Caki2 (cell line): ENCODE measurements at regions of chr1 and their contacts with region 1.

Region 1: DNA sequence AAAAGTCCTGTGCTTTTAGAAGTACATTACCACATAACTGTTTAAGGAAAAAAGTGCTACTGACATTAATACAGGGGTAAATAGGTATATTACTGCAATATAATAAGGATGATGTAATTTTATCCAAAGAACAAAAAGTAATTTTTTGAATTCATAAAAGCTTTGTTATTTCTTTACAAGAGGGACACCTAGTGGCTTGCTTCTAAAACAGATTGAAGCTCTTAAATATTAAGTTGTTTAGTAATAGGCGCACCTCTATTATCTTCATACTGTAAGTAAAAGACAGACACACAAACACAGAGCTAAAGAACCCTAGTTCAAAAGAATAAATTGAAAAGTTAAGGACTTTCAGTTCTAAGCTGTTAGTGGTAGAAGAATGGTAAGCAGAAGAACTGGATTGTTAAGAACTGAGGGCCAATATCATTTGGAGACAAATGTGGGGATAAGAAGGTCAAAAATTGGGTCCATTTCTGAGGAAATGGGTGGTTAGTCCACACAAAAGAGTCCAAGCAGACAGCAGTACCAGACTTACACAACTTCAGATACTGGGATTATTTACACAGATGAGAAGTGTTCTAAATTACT is 15.4 kb downstream of the ZNHIT6 start:
- DNase-seq: peak; percentile 18

Region 2: DNA sequence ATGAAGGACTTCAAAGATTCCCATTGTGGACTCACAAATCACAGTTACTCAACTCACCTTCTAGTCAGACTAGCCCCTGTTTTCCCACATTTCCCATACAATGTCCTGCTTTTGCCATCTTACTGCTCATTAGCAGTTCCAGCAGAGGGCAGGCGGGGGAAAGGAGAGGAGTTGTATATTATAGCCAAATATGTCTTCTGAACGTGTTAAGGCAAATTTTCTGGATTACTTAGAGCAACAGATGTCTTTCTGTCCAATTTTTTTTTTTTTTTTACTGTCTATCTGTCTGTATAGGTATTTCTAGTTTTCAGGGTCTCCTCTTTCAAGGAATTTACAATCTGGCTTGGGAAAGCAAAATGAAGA is 197.9 kb before region 1 on chr1:
- in situ Hi-C with region 1: loop called (anchors 25 kb)
- DNase-seq: peak; percentile 11

Region 3: DNA sequence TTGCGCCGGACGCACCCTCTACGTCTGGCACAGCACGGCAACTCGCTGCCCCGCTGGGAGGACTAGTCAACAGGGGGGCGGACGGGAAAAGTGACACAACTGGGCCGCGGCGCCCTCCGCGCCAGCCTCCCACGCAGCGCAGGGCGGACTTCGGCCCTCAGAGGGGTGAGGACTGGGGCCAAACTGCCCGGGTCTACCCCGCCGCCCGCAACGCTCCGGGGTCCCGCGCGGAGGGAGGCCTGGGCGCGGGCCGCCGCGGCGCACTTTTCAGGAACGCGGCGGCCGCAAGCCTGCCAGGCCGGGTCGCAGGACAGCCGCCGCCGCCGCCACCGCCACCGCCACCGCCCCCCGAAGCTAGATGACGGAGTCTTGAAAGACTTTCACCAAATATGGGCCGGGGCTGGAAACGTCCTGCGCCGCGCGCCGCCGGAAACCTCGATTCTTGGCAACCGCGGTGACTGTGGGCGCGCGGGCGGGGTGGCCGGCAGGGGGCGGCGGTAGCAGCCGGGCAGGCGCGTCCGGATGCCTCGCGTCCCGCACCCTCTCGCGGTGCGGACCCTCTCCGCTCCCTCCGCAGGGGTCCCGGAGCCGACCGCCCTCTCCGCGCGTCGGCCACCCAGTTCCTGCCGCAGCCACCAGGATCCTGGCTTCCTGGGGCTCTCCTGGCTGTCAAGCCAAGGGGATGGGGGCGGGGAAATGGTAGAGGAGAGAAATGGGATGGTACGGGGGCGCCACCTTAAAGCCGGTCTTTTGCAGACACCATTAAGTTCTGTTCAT is 116.0 kb before region 1 on chr1:
- in situ Hi-C with region 1: loop called (anchors 25 kb)
- DNase-seq: peak; percentile 71

Region 4: DNA sequence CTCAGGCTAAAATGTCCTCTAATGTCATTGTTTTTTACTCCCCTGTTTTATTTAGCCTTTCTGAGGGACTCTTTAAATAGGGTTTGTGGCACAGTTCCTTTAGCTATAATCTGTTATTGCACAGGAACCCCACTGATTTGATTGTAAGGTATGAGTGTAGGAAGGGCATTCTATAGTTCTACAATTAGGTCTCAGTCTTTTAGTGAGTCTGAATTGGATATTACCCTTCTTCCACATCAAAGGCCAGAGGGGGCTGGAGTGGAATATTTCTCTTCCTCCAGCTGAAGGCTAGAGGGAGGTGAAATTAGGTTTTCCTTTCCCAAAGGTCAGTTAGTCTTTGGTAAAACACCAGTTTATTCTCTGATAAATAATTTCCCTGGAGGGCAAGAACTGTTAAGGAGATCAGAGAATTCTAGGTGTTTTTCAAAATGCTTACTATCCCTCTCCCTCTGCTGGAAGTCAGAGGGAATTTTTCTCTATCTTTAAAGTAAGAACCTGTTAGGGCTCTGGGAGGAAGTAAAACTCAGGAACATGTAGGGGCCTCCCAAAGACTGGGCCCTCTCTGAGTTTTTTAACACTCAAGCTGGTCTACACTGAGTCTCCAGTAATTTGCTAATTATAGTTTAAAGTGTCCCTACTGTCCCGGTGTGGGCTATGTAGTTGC is 191.7 kb after region 1 on chr1:
- in situ Hi-C with region 1: no loop called
- DNase-seq: no peak